CD8-positive, alpha-beta T cell (primary cell): ENCODE measurements at regions of chr6 and their contacts with region 1.

Region 1: GRCh38 chr6:158660333-158660754 is 10.5 kb downstream of the SYTL3 start:
- DNase-seq: peak in 8 of 9 experiments; percentile 22 to 78 (median 64)
- ATAC-seq: peak; percentile 77
- H3K4me3 ChIP-seq: no peak overlapping the region
- H3K4me3 Mint-ChIP-seq: peak overlapping the region; percentile 19
- H3K27ac ChIP-seq: no peak overlapping the region
- H3K27ac Mint-ChIP-seq: peak overlapping the region; percentile 80
- H3K4me1 ChIP-seq: peaks cover 28% of the 10 kb centered on the region
- H3K4me1 Mint-ChIP-seq: peaks cover 58% of the 10 kb centered on the region
- H3K27me3 ChIP-seq: no peaks in the 10 kb centered on the region
- H3K27me3 Mint-ChIP-seq: no peaks in the 10 kb centered on the region
- CTCF ChIP-seq: peak; percentile 73

Region 2: GRCh38 chr6:158584236-158584651 is 76.1 kb before region 1 on chr6:
- CTCF ChIA-PET with region 1: no interaction called
- POLR2A ChIA-PET with region 1: no interaction called
- intact Hi-C with region 1: no loop called
- DNase-seq: no peak
- ATAC-seq: no peak
- H3K4me3 ChIP-seq: no peak overlapping the region
- H3K4me3 Mint-ChIP-seq: no peak overlapping the region
- H3K27ac ChIP-seq: no peak overlapping the region
- H3K27ac Mint-ChIP-seq: peak overlapping the region; percentile 55
- H3K4me1 ChIP-seq: no peaks in the 10 kb centered on the region
- H3K4me1 Mint-ChIP-seq: peaks cover 7% of the 10 kb centered on the region
- H3K27me3 ChIP-seq: no peaks in the 10 kb centered on the region
- H3K27me3 Mint-ChIP-seq: no peaks in the 10 kb centered on the region
- CTCF ChIP-seq: no peak

Region 3: GRCh38 chr6:158631678-158632537 is 28.4 kb before region 1 on chr6:
- CTCF ChIA-PET with region 1: interaction called, 27 read pairs
- POLR2A ChIA-PET with region 1: no interaction called
- intact Hi-C with region 1: no loop called
- DNase-seq: peak in 1 of 9 experiments; percentile 40
- ATAC-seq: no peak
- H3K4me3 ChIP-seq: no peak overlapping the region
- H3K4me3 Mint-ChIP-seq: no peak overlapping the region
- H3K27ac ChIP-seq: peak overlapping the region in 1 of 2 experiments; percentile 40
- H3K27ac Mint-ChIP-seq: peak overlapping the region; percentile 87
- H3K4me1 ChIP-seq: peaks cover 23% of the 10 kb centered on the region
- H3K4me1 Mint-ChIP-seq: peaks cover 55% of the 10 kb centered on the region
- H3K27me3 ChIP-seq: no peaks in the 10 kb centered on the region
- H3K27me3 Mint-ChIP-seq: no peaks in the 10 kb centered on the region
- CTCF ChIP-seq: no peak

Region 4: DNA sequence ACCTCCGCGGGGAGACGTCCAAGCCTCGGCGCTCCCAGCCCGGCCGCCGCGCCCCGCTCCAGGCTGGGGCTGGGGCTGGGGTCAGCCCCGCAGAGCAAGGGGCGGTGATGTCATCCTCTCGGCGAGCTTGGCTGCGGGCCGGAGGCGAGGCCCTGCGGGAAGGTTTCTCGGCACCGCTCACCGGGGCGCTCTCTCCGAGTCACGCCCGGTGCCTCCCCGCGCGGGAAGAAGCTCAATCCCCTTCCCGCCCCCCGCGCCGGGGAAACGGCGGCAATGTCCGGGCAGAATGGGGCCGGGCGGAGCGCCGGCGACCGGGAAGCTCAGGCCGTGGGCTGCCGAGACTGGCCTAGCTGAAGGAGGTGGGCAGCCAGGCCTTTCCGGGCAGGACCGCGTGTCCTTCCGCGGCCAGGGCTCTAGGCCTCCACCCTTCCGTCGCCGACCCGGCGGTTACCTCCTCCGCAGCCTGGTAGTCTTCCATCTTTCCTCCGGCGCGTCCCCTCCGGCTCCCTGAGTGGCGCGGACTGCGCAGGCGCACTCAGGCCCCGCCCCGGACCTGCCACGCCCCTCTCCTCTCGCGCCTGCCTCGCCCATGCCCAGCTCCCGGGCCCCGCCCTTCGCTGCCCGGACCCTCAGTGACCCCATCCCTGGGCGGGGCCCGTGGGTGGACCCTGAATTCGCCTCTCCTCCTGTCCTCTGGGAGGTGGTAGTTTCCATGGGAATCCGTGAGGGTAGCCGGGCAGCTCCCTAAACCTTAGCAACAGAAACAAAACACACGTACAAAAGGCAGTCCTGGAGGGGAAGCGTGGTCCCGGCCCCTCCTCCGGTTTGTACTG is 15.9 kb before region 1 on chr6 and contains the start of gene DYNLT1:
- CTCF ChIA-PET with region 1: interaction called, 36 read pairs
- POLR2A ChIA-PET with region 1: interaction called, 11 read pairs
- intact Hi-C with region 1: loop called (anchors 2 kb)
- DNase-seq: peak; percentile 77 to 92 (median 85)
- ATAC-seq: peak; percentile 67
- H3K4me3 ChIP-seq: peak within 1 kb of the TSS; percentile 77 to 84
- H3K4me3 Mint-ChIP-seq: peak within 1 kb of the TSS; percentile 97
- H3K27ac ChIP-seq: peak within 1 kb of the TSS; percentile 93 to 94
- H3K27ac Mint-ChIP-seq: peak within 1 kb of the TSS; percentile 96
- H3K4me1 ChIP-seq: peaks cover 49% of the 10 kb centered on the region
- H3K4me1 Mint-ChIP-seq: peaks cover 63% of the 10 kb centered on the region
- H3K27me3 ChIP-seq: no peaks in the 10 kb centered on the region
- H3K27me3 Mint-ChIP-seq: no peaks in the 10 kb centered on the region
- CTCF ChIP-seq: no peak
- total RNA-seq, gene DYNLT1: 109 TPM

Region 5: DNA sequence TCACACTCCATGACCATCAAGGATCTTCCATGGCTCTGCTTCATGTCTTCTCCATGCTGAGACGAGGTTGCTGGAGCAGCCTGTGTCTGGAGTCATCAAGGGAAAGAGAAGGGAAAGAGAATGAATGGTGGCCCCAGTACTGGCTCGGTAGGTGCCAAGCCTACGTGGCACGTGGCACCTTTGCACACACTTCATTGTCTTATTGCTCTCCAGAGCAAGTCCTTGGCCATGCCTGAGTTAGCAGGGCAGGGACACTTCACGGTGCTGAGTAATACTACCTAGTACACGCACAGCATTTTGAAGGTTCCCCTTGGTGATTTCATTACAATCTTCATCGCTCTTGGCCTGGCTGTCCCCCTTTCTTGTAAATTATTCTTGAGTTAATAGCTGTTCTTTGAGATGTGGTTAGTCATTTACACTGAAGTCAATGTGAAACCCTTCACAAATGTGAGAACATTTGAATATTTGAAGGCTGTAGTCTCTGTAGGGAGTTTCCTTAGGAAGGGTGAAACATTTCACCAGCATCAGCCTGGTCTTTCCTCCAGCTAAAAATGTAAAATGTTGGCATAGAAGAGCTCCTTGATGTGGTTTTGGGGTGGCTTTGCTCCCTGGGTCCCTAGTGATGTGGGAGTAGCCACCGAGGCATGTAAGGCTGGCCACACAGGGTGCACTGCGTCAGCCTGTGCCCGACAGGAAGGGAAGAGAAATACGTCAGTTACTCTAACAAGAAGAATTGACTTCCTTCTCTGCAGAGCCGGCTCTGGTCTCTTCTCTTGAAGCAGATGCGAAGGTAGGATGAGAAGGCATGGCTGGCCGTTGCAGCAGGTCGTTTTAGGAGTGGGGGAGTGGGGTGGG is 10.8 kb before region 1 on chr6 and contains the start of gene SYTL3:
- CTCF ChIA-PET with region 1: interaction called, 36 read pairs
- POLR2A ChIA-PET with region 1: interaction called, 11 read pairs
- intact Hi-C with region 1: loop called in 1 of 2 experiments (anchors 2 kb)
- DNase-seq: peak; percentile 50 to 97 (median 76)
- ATAC-seq: peak; percentile 61
- H3K4me3 ChIP-seq: peak within 1 kb of the TSS in 1 of 2 experiments; percentile 43
- H3K4me3 Mint-ChIP-seq: peak within 1 kb of the TSS; percentile 77
- H3K27ac ChIP-seq: peak within 1 kb of the TSS; percentile 53 to 76
- H3K27ac Mint-ChIP-seq: peak within 1 kb of the TSS; percentile 85
- H3K4me1 ChIP-seq: peaks cover 51% of the 10 kb centered on the region
- H3K4me1 Mint-ChIP-seq: peaks cover 64% of the 10 kb centered on the region
- H3K27me3 ChIP-seq: no peaks in the 10 kb centered on the region
- H3K27me3 Mint-ChIP-seq: no peaks in the 10 kb centered on the region
- CTCF ChIP-seq: no peak
- total RNA-seq, gene SYTL3: 38.2 to 44.6 TPM

Region 6: GRCh38 chr6:160221423-160221822 is 1561.1 kb after region 1 on chr6:
- CTCF ChIA-PET with region 1: no interaction called
- POLR2A ChIA-PET with region 1: no interaction called
- intact Hi-C with region 1: no loop called
- DNase-seq: no peak
- ATAC-seq: no peak
- H3K4me3 ChIP-seq: no peak overlapping the region
- H3K4me3 Mint-ChIP-seq: no peak overlapping the region
- H3K27ac ChIP-seq: no peak overlapping the region
- H3K27ac Mint-ChIP-seq: no peak overlapping the region
- H3K4me1 ChIP-seq: no peaks in the 10 kb centered on the region
- H3K4me1 Mint-ChIP-seq: no peaks in the 10 kb centered on the region
- H3K27me3 ChIP-seq: no peaks in the 10 kb centered on the region
- H3K27me3 Mint-ChIP-seq: peaks cover 23% of the 10 kb centered on the region
- CTCF ChIP-seq: no peak